Vagina (tissue), 2 donors: ENCODE measurements at regions of chr10 and their contacts with region 1.

Region 1: GRCh38 chr10:7408291-7409044 is 2.4 kb downstream of the SFMBT2 start:
- DNase-seq: no peak
- H3K4me3 ChIP-seq: peak overlapping the region; percentile 54 to 75
- H3K27ac ChIP-seq: peak overlapping the region; percentile 89
- H3K4me1 ChIP-seq: peaks cover 46% of the 10 kb centered on the region
- H3K27me3 ChIP-seq: no peaks in the 10 kb centered on the region
- CTCF ChIP-seq: peak; percentile 18 to 49 (median 23)
- POLR2A ChIP-seq: no peak

Region 2: GRCh38 chr10:7260412-7260900 is 148.0 kb before region 1 on chr10:
- intact Hi-C with region 1: loop called (anchors 2 kb)
- DNase-seq: peak in 1 of 2 donors; percentile 97
- H3K4me3 ChIP-seq: no peak overlapping the region
- H3K27ac ChIP-seq: peak overlapping the region; percentile 66
- H3K4me1 ChIP-seq: peaks cover 21% of the 10 kb centered on the region
- H3K27me3 ChIP-seq: no peaks in the 10 kb centered on the region
- CTCF ChIP-seq: peak; percentile 54 to 89 (median 61)
- POLR2A ChIP-seq: no peak